Transverse colon (tissue), 4 donors: ENCODE measurements at regions of chr21 and their contacts with region 1.

Region 1: GRCh38 chr21:38805328-38806152 is at the start of gene ETS2:
- DNase-seq: peak; percentile 93
- H3K4me3 ChIP-seq: peak within 1 kb of the TSS; percentile 89 to 98 (median 96)
- H3K27ac ChIP-seq: peak within 1 kb of the TSS; percentile 94 to 99 (median 98)
- H3K4me1 ChIP-seq: peaks cover 8 to 55% (median 49%) of the 10 kb centered on the region in 4 donors
- H3K27me3 ChIP-seq: no peaks in the 10 kb centered on the region
- CTCF ChIP-seq: no peak
- EP300 ChIP-seq: peak; percentile 33
- POLR2A ChIP-seq: peak; percentile 98
- total RNA-seq, gene ETS2: 55.1 to 174 (median 127) TPM

Region 2: DNA sequence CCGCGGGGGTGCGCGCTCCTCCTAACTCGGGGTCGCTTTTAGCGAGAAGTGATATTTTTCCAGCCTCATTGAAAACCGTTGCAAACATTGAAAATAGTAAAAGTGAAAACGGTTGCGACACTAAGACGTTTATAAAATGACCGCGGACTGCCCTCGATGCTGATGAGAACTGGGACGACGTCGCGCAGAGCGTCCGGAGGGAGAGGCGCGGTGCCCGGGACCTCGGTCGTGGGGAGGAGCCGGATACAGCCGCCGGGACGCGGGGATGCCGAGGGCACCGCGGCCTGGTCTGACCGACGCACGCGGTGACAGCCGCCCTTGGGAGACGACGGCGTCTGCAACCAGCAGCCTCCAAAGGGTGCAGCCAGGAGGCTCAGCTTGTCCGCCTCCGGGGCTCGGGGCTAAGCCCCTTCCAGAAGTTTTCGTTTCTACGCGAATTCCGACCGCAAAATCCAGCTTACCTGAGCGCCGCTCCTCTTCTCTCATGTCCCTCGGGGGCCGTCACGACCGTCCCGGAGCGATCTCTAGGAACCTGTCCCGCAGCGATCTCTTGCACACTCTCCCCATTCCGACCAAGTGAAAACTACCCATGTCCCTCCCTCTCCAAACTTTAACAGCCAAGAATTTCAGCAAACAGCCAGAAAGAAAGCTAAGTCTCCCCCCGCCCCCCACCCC is 144.2 kb before region 1 on chr21:
- in situ Hi-C with region 1: no loop called
- intact Hi-C with region 1: no loop called
- DNase-seq: peak; percentile 27
- H3K4me3 ChIP-seq: peak overlapping the region; percentile 25 to 74 (median 36)
- H3K27ac ChIP-seq: peak overlapping the region; percentile 32 to 58 (median 47)
- H3K4me1 ChIP-seq: peaks cover 0 to 26% (median 18%) of the 10 kb centered on the region in 4 donors
- H3K27me3 ChIP-seq: peaks cover 68% of the 10 kb centered on the region
- CTCF ChIP-seq: no peak
- EP300 ChIP-seq: no peak
- POLR2A ChIP-seq: no peak

Region 3: GRCh38 chr21:39105341-39105765 is 299.8 kb after region 1 on chr21:
- in situ Hi-C with region 1: no loop called
- intact Hi-C with region 1: loop called (anchors 10 kb)
- DNase-seq: no peak
- H3K4me3 ChIP-seq: no peak overlapping the region
- H3K27ac ChIP-seq: peak overlapping the region; percentile 54 to 68 (median 64)
- H3K4me1 ChIP-seq: peaks cover 0 to 7% (median 2%) of the 10 kb centered on the region in 4 donors
- H3K27me3 ChIP-seq: no peaks in the 10 kb centered on the region
- CTCF ChIP-seq: no peak
- EP300 ChIP-seq: no peak
- POLR2A ChIP-seq: no peak